ENCODE measurements at regions of chr12 and their contacts with region 1.

Region 1: GRCh38 chr12:113184900-113185773 is at the starts of genes DDX54 and RITA1:
- DNase-seq: peak; percentile 81
- ATAC-seq: peak; percentile 87
- H3K4me3 ChIP-seq: peak within 1 kb of the TSS; percentile 86
- H3K27ac ChIP-seq: peak within 1 kb of the TSS; percentile 94
- H3K4me1 ChIP-seq: peaks cover 9% of the 10 kb centered on the region
- H3K27me3 ChIP-seq: no peaks in the 10 kb centered on the region
- CTCF ChIP-seq: no peak
- EP300 ChIP-seq: no peak
- POLR2A ChIP-seq: peak; percentile 98
- RAD21 ChIP-seq: no peak
- polyA plus RNA-seq, gene DDX54: 1.9 to 8.6 TPM
- polyA plus RNA-seq, gene RITA1: 2.3 to 6.4 TPM

Region 2: DNA sequence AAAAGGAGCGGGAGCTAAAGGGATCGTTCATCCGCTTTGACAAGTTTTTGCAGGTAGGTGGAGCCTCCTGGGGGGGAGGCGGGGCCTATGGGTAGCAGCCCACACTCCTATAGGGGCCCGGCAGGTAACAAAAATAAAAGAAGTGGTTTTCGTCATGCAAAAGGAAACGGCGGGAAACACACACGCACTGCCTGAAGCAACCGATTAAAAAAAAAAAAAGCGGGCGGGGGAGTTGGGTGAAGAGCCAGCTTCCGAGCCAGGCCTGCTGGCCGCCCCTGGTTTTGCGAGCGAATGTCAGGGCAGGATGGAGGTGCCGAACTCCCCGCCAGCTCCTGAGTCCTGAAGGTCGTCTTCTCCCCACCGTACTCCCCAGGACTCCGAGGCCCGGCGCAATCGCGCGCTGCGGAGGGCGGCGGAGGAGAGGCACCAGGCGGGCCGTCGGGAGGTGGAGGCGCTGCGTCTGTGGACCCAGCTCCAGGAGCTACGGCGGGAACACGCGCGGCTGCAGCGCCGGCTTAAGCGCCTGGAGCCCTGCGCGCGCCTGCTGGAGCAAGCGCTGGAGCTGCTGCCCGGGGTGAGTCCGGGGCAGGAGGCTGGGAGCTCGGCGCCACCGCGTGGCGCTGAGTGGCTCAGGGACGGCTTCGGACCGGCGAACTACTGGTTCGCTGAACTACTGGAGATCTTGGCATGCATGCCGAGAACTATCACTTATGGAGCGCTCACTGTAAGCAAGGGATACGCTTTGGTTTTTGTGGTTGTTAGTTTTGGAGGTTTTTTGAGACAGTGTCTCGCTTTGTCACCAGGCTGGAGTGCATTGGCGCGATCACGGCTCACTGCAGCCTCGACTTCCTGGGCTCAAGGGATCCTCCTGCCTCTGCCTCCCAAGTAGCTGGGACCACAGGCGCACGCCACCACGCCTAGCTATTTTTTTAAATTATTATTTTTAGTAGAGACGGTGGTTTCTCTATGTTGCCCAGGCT is 32.0 kb before region 1 on chr12:
- CTCF ChIA-PET with region 1: no interaction called
- POLR2A ChIA-PET with region 1: no interaction called
- RAD21 ChIA-PET with region 1: no interaction called
- SMC1A ChIA-PET with region 1: no interaction called
- in situ Hi-C with region 1: no loop called
- intact Hi-C with region 1: no loop called
- DNase-seq: no peak
- ATAC-seq: peak; percentile 89
- H3K4me3 ChIP-seq: peak overlapping the region; percentile 59; the same call in 1 of the 2 replicates
- H3K27ac ChIP-seq: no peak overlapping the region
- H3K4me1 ChIP-seq: peaks cover 15% of the 10 kb centered on the region
- H3K27me3 ChIP-seq: peaks cover 7 to 8% of the 10 kb centered on the region in 2 experiments; a peak in 2 of 4 replicates
- CTCF ChIP-seq: peak; percentile 45 to 77 (median 53); a peak in 5 of 6 replicates
- EP300 ChIP-seq: no peak
- POLR2A ChIP-seq: no peak
- RAD21 ChIP-seq: peak; percentile 59

Region 3: GRCh38 chr12:113208041-113208934 is 23.2 kb after region 1 on chr12:
- CTCF ChIA-PET with region 1: interaction called, 15 read pairs
- POLR2A ChIA-PET with region 1: interaction called, 3 read pairs
- RAD21 ChIA-PET with region 1: interaction called, 5 read pairs
- SMC1A ChIA-PET with region 1: interaction called, 7 read pairs
- in situ Hi-C with region 1: no loop called
- intact Hi-C with region 1: loop called (anchors 2 kb)
- DNase-seq: peak; percentile 99
- ATAC-seq: peak; percentile 84
- H3K4me3 ChIP-seq: peak overlapping the region; percentile 16; the same call in 1 of the 2 replicates
- H3K27ac ChIP-seq: peak overlapping the region; percentile 84
- H3K4me1 ChIP-seq: peaks cover 54% of the 10 kb centered on the region
- H3K27me3 ChIP-seq: no peaks in the 10 kb centered on the region
- CTCF ChIP-seq: no peak
- EP300 ChIP-seq: peak; percentile 94 to 95
- POLR2A ChIP-seq: peak; percentile 75
- RAD21 ChIP-seq: peak; percentile 17; the same call in 1 of the 2 replicates

Region 4: GRCh38 chr12:113221181-113221997 is 36.3 kb after region 1 on chr12 and contains the start of gene TPCN1:
- CTCF ChIA-PET with region 1: interaction called, 6 read pairs
- POLR2A ChIA-PET with region 1: interaction called, 21 read pairs
- RAD21 ChIA-PET with region 1: interaction called, 3 read pairs
- SMC1A ChIA-PET with region 1: interaction called, 17 read pairs
- in situ Hi-C with region 1: no loop called
- intact Hi-C with region 1: loop called (anchors 2 kb)
- DNase-seq: peak; percentile 100
- ATAC-seq: peak; percentile 89
- H3K4me3 ChIP-seq: peak within 1 kb of the TSS; percentile 89
- H3K27ac ChIP-seq: peak within 1 kb of the TSS; percentile 85
- H3K4me1 ChIP-seq: peaks cover 19% of the 10 kb centered on the region
- H3K27me3 ChIP-seq: no peaks in the 10 kb centered on the region
- CTCF ChIP-seq: no peak
- EP300 ChIP-seq: no peak
- POLR2A ChIP-seq: peak; percentile 99
- RAD21 ChIP-seq: no peak
- polyA plus RNA-seq, gene TPCN1: 0.79 to 1.0 TPM

Region 5: GRCh38 chr12:113422030-113422885 is 237.1 kb after region 1 on chr12 and contains the start of gene SDSL:
- CTCF ChIA-PET with region 1: interaction called, 4 read pairs
- POLR2A ChIA-PET with region 1: no interaction called
- RAD21 ChIA-PET with region 1: interaction called, 3 read pairs
- SMC1A ChIA-PET with region 1: interaction called, 6 read pairs
- in situ Hi-C with region 1: no loop called
- intact Hi-C with region 1: loop called (anchors 5 kb)
- DNase-seq: peak; percentile 76
- ATAC-seq: peak; percentile 95
- H3K4me3 ChIP-seq: peak within 1 kb of the TSS; percentile 63
- H3K27ac ChIP-seq: peak within 1 kb of the TSS; percentile 23; the same call in 1 of the 2 replicates
- H3K4me1 ChIP-seq: peaks cover 10% of the 10 kb centered on the region
- H3K27me3 ChIP-seq: no peaks in the 10 kb centered on the region
- CTCF ChIP-seq: no peak
- EP300 ChIP-seq: peak in 1 of 2 experiments; percentile 28; a peak in 1 of 4 replicates
- POLR2A ChIP-seq: no peak; the same call in 1 of the 2 replicates
- RAD21 ChIP-seq: no peak
- polyA plus RNA-seq, gene SDSL: 0.18 to 0.49 TPM